SK-MEL-5 (cell line): ENCODE measurements at regions of chr14 and their contacts with region 1.

Region 1: GRCh38 chr14:90903101-90903500 is 86.9 kb upstream of the TTC7B start:
- DNase-seq: peak; percentile 76

Region 2: GRCh38 chr14:90569606-90570387 is 333.3 kb before region 1 on chr14:
- in situ Hi-C with region 1: no loop called
- DNase-seq: peak; percentile 5

Region 3: GRCh38 chr14:90797482-90797881 is 105.6 kb before region 1 on chr14:
- in situ Hi-C with region 1: no loop called
- DNase-seq: peak; percentile 27

Region 4: DNA sequence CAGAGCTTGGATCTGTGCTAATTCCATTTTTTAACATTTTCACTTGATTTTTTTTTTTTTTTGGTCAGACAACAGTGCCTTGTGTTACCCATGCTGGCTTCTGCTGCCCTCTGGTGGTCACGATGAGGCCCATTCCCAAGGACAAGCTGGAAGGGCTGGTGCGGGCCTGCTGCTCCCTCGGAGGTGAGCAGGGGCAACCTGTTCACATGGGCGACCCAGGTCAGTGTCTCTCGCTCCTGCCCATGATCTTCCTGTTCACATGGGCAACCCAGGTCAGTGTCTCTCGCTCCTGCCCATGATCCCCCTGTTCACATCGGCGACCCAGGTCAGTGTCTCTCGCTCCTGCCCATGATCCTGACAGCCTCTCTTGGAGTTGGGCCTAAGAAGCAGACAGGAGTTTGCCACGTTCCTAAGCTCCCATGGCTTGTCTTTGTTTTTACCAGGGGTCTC is 270.1 kb after region 1 on chr14:
- in situ Hi-C with region 1: loop called (anchors 25 kb)
- DNase-seq: peak; percentile 87

Region 5: DNA sequence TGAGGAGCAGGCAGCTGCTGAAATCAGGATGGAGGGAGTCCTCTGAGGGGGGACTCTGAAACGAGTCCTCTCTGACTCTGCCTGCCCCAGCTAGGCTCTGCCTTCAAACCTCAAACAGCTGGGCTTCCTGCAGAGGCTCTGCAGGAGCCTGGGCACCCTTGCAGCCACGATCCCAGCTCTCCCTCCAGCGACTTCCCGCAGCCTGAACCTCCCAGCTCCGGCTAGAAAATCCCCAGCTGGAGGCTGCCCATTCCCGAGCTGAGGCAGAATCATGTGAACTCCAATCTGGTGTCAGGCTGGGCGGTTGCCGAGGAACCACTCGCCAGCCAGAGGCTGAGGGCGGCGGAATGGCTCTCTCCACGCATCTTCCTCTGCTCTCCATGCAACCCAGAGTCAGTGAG is 341.4 kb after region 1 on chr14 and contains the start of gene GPR68:
- in situ Hi-C with region 1: no loop called
- DNase-seq: no peak
- total RNA-seq, gene GPR68: not detected in 2 replicates

Region 6: GRCh38 chr14:91286530-91286937 is 383.4 kb after region 1 on chr14:
- in situ Hi-C with region 1: loop called (anchors 25 kb)
- DNase-seq: peak; percentile 79

Region 7: GRCh38 chr14:91305650-91306431 is 402.7 kb after region 1 on chr14:
- in situ Hi-C with region 1: no loop called
- DNase-seq: no peak